ENCODE measurements at regions of chr10 and their contacts with region 1.

Region 1: DNA sequence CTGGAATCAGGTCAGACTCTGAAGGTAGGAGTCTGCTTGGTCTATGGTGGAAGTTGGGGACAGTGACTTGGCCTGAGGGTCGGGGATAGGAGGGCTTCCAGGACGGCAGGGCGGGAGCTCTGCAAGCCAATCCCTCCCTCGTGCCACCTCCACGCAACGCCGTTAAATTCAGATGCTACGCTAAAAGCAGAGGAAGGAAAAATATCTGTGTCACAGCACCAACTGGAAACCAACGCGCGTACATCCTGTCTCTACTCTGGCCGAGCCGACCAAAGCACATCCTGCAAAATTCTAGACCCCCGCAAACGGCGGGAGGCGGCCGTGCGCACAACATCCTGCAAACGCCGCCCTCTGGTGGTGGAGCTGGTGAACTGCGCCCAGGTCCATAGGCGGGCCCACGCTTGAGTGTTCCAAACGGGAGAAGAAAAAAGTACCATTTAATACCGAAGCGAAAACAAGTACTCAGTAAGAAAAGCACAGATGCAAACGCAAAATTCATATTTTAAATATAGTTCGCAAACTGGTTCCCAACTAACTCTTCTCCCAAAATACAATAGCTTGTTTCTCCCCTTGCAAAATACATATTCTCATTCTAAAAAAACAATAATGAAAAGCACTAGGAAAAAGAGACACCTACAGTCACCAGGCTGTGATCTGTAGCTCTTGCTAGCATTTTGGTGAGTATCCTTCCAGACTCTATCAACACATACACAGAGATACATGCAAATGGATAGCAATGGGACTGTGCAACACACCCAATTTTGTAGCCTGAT is 45.7 kb upstream of the HSPA12A start:
- DNase-seq: peak; percentile 93
- H3K4me3 ChIP-seq: peak overlapping the region in 3 of 8 donors; percentile 14 to 59 (median 17)
- H3K27ac ChIP-seq: peak overlapping the region in 6 of 8 donors; percentile 12 to 74 (median 56)
- H3K4me1 ChIP-seq: peaks cover 0 to 14% (median 9%) of the 10 kb centered on the region in 6 donors
- H3K27me3 ChIP-seq: peaks cover 0 to 17% (median 1%) of the 10 kb centered on the region in 7 donors
- CTCF ChIP-seq: peak; percentile 85 to 99 (median 96)
- POLR2A ChIP-seq: no peak

Region 2: DNA sequence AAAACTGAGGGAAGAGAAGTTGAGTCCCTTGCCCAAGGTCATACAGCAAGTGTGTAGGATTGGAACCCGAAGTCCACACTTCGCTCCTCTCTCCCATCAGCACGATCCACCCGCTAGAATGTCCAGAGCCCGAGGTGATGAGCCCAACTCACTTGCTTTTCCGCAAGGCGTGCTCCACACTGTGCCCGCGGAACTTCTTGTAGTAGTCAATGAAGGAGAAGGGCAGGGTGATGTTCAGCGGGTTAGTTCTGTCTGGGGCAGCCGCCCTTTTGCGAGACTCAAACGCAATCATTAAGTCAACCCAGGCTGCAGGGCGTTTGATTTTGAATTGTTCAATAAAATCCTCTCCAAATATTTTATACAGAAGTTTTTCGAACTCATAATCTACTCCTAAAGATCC is 108.7 kb before region 1 on chr10:
- intact Hi-C with region 1: loop called (anchors 2 kb)
- DNase-seq: no peak
- H3K4me3 ChIP-seq: no peak overlapping the region
- H3K27ac ChIP-seq: no peak overlapping the region
- H3K4me1 ChIP-seq: peaks cover 0 to 7% (median 3%) of the 10 kb centered on the region in 6 donors
- H3K27me3 ChIP-seq: no peaks in the 10 kb centered on the region
- CTCF ChIP-seq: no peak
- POLR2A ChIP-seq: no peak

Region 3: DNA sequence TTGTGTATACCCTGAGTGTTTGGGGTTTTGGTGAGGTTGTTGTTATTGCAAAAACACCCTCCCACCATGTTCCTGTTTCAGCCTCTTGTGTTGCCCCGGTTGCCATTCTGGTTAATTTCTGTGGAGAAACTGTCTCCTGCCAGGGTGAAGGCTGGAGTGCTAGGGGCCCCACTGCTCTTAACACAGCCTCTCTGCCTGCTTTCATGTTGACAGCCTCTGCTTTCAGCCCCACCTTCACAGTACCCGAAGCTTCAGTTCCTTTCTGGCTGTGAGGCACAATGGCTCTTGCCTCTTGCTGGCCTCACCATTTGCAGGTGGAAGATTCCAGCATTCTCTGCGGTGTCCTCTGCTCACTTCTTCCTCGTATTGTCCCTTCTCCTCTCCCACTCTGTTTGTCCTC is 472.0 kb after region 1 on chr10:
- intact Hi-C with region 1: no loop called
- DNase-seq: no peak
- H3K4me3 ChIP-seq: no peak overlapping the region
- H3K27ac ChIP-seq: no peak overlapping the region
- H3K4me1 ChIP-seq: peaks cover 0 to 3% (median 0%) of the 10 kb centered on the region in 6 donors
- H3K27me3 ChIP-seq: peaks cover 0 to 97% (median 0%) of the 10 kb centered on the region in 7 donors
- CTCF ChIP-seq: no peak
- POLR2A ChIP-seq: no peak